ENCODE measurements at regions of chr5 and their contacts with region 1.

Region 1: DNA sequence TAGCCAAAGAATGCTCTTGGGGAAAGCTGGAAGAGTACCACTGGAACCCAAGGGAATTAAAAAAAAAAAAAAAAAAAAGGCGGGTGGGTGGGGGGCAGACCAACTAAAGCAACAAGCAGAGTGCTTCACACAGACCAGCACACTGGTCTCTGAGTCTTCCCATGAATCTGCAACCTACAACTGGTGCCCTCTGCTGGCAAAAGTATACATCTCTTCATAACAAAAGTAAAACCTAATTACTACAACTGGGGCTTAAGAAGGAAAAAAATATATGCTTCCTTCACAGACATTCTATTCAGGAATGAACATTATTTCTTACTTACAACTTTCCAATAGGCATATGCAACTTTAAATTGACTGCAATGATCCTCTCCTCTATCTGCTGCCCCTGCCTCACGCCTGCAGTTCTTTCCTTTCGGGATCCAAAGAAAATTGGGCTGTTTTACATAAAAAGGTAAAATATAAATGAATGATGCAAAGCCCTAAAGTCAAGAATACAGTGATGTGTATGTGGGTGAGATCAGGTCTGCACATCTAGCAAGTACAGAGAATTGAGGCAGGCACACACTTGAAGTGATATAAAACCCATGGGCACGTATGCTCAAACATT is 7.2 kb upstream of the KLHL3 start:
- DNase-seq: peak; percentile 72
- ATAC-seq: peak; percentile 86
- H3K4me3 Mint-ChIP-seq: no peak overlapping the region
- H3K27ac Mint-ChIP-seq: no peak overlapping the region
- H3K4me1 Mint-ChIP-seq: peaks cover 6% of the 10 kb centered on the region
- H3K27me3 Mint-ChIP-seq: no peaks in the 10 kb centered on the region

Region 2: DNA sequence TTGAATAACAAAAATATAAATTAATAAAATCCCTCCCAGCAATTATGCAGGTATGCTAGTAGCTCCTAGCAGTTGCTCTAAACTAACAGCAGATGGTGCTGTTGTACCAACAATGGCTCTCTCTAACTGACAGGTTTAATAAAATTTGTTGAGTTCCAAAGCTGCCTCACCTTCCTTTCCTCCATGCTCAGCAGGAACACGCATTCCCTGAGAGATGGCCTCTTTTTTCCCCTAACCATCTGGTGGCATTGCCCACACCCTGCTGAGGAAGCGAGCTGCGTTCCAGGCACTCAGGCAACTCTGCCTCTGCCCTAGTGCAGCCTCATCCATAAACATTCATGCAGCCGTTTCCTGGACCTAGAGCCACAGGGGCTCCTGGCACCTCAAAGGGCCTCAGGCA is 113.5 kb before region 1 on chr5:
- CTCF ChIA-PET with region 1: interaction called, 122 read pairs
- DNase-seq: no peak
- ATAC-seq: peak; percentile 69
- H3K4me3 Mint-ChIP-seq: no peak overlapping the region
- H3K27ac Mint-ChIP-seq: no peak overlapping the region
- H3K4me1 Mint-ChIP-seq: no peaks in the 10 kb centered on the region
- H3K27me3 Mint-ChIP-seq: no peaks in the 10 kb centered on the region

Region 3: DNA sequence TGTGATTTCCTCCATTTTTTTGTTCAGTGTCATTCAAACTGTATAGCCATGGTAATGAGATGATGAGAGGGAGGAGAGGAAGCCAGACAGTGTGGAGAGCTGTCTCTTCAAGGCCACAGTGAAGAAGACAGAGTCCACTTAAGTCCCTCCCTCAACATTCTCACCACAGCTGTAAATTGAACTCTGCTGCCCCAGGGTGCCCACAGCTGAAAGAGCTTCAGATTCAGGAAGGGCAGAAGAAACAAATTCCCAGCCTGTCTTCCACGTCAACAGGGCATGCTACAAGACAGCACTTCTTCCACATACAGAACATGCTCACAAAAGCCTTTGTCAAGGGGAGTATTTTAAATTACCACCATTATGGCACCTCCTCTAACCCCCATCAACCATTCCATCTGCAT is 107.6 kb before region 1 on chr5:
- CTCF ChIA-PET with region 1: interaction called, 122 read pairs
- DNase-seq: no peak
- ATAC-seq: no peak
- H3K4me3 Mint-ChIP-seq: no peak overlapping the region
- H3K27ac Mint-ChIP-seq: no peak overlapping the region
- H3K4me1 Mint-ChIP-seq: no peaks in the 10 kb centered on the region
- H3K27me3 Mint-ChIP-seq: no peaks in the 10 kb centered on the region

Region 4: GRCh38 chr5:137665678-137666460 is 77.3 kb before region 1 on chr5:
- CTCF ChIA-PET with region 1: interaction called, 163 read pairs
- DNase-seq: peak; percentile 77
- ATAC-seq: peak; percentile 98
- H3K4me3 Mint-ChIP-seq: no peak overlapping the region
- H3K27ac Mint-ChIP-seq: peak overlapping the region; percentile 72
- H3K4me1 Mint-ChIP-seq: peaks cover 16% of the 10 kb centered on the region
- H3K27me3 Mint-ChIP-seq: no peaks in the 10 kb centered on the region

Region 5: GRCh38 chr5:137695651-137696428 is 47.3 kb before region 1 on chr5:
- CTCF ChIA-PET with region 1: interaction called, 25 read pairs
- DNase-seq: no peak
- ATAC-seq: peak; percentile 48
- H3K4me3 Mint-ChIP-seq: peak overlapping the region; percentile 11
- H3K27ac Mint-ChIP-seq: peak overlapping the region; percentile 84
- H3K4me1 Mint-ChIP-seq: peaks cover 26% of the 10 kb centered on the region
- H3K27me3 Mint-ChIP-seq: no peaks in the 10 kb centered on the region

Region 6: DNA sequence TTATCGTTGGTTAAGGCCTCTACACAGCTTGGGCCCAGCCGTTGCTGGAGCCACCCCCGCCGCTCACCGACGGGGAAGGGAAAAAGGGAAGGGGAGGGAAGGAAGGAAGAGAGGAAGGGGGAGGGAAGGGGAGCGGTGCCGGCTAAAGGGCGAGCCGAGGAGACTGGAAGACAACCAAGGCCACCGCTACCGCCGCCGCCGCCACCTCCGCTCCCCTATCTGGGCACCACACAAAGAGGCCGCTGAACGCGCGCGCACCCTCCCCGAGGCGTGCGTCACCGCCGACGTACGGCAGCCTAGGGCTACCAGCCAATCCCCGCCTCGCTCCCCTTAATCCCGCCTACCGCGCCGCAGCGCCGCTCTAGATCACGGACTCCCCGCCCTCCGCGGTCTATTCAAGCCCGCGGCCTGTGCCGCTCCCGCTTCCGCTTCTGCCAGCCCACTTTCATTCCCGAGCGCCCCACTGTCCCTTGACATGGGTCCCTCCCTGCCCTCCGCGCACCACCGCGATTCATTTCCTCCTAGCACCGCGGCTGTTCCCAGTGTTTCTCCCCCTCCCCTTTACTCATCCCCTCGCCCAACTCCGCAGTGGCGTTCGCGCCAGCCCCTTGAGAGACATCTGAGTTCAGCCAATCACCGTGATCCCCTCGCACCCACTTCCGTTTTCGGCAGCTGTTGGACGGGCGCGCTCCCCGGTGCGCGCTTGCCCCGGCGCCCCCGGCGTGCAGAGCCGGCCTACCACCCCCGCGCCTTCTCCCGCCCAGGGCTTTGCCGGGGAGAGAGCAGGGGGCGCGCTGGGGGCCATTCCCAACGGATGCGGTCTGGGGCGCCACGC is 11.2 kb after region 1 on chr5 and contains the start of gene HNRNPA0:
- CTCF ChIA-PET with region 1: interaction called, 21 read pairs
- DNase-seq: peak; percentile 97
- ATAC-seq: peak; percentile 88
- H3K4me3 Mint-ChIP-seq: peak within 1 kb of the TSS; percentile 96
- H3K27ac Mint-ChIP-seq: peak within 1 kb of the TSS; percentile 100
- H3K4me1 Mint-ChIP-seq: peaks cover 30% of the 10 kb centered on the region
- H3K27me3 Mint-ChIP-seq: no peaks in the 10 kb centered on the region
- total RNA-seq, gene HNRNPA0: 26.0 to 34.0 TPM